Right ventricle myocardium inferior (tissue), 1 donor: ENCODE measurements at regions of chr20 and their contacts with region 1.

Region 1: DNA sequence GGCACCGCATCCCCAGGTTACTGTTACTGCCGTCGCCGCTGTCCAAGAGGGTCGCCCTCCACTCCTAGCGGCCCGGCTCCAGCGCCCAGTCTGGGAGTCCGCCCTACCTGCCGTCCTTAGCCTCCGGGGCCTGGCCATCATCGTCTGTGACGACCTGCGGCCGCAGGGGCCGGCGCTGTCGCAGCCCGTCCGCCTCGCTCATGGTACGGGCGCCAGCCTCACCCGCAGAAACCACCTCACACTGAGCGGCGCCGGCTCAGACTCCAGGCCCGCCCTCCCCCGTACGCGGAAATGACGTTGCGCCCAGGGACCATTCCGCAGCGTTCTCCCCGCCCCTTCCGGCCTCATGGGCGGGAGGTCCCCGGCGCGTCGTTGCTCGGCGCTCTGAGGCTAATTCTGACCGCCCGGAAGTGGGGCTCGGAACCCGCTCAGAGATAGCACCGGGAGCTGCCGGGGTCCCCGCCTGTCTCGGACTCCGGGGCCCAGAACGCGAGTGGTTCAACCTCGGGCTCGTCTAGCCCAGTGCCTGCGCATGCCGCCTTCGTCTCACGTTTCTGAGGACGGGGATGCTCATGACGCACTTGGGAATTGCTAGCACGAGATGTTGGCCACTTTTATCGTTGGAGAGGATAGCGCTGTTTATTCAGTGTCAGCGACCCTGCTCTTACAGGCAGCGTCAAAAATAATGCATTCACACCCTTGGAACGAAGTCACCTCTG is at the start of gene APMAP:
- DNase-seq: peak; percentile 99
- ATAC-seq: peak; percentile 97
- total RNA-seq, gene APMAP: 26.8 TPM

Region 2: GRCh38 chr20:24934101-24934661 is 58.5 kb before region 1 on chr20:
- intact Hi-C with region 1: no loop called
- DNase-seq: no peak
- ATAC-seq: no peak

Region 3: DNA sequence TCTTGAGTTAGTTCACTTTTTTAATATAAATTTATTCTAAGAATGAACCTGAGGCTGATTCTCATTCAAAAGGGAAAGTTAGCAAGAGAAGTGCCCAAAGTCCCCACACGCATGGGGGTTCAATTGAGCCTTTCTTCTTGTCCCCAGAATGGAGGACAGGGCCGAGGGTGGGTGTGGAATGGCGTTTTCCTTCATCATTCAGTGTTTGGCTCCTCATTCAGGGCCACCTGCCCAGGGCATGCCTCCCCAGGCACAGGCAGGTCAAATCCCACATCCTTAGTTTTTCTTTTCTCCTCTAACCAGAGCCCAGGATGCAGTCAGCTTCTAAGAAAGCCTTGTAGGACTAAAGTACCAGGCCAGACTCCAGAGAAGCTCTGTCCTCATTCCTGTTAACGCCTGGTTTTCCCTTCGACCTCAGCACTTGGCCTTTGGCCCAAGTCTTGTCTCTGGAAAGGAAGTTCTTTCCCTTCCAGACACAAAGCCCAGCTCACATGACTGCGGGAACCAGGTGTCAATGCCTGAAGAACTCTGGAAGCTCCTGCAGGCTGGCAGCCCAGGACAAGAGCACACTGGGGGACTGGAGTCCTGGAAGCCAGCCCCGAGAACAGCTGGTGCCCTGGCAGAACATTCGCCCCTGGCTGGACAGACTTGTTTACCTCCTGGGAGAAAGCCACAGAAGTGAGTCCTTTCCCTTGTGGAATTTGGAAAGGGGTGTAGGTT is 46.9 kb after region 1 on chr20:
- intact Hi-C with region 1: no loop called
- DNase-seq: peak; percentile 90
- ATAC-seq: peak; percentile 85

Region 4: DNA sequence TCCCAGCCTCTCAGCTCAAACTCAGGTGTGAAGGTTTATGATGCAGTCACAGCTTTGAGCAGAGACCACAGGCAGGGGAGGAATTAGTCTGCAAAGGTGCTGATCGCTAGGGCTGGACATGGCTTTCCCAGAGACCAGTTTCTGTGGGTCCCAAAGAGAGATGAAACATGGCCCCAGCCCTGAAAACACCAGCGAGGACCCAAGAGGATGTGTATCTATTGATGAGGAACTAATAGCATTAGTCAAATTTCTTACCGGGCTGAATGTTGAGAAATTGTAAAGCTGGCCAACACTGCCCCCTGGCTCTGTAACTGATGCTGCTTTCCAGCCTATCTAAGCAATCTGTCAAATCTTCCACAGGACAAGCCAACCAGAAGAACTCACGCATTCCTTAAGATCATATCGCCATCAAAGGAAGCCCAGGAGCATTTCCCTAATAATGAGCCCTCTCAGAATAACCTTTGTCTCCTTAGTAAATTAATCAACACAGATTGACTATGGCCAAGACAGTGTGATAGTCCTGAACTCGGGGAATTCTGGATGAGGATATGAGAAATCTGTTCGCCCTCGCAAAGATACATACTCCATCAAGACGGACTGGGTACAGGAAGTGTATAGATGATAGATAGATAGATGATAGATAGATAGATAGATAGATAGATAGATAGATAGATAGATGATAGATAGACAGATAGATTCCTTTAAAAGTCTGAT is 73.1 kb after region 1 on chr20:
- intact Hi-C with region 1: loop called (anchors 1 kb)
- DNase-seq: peak; percentile 71
- ATAC-seq: peak; percentile 73

Region 5: DNA sequence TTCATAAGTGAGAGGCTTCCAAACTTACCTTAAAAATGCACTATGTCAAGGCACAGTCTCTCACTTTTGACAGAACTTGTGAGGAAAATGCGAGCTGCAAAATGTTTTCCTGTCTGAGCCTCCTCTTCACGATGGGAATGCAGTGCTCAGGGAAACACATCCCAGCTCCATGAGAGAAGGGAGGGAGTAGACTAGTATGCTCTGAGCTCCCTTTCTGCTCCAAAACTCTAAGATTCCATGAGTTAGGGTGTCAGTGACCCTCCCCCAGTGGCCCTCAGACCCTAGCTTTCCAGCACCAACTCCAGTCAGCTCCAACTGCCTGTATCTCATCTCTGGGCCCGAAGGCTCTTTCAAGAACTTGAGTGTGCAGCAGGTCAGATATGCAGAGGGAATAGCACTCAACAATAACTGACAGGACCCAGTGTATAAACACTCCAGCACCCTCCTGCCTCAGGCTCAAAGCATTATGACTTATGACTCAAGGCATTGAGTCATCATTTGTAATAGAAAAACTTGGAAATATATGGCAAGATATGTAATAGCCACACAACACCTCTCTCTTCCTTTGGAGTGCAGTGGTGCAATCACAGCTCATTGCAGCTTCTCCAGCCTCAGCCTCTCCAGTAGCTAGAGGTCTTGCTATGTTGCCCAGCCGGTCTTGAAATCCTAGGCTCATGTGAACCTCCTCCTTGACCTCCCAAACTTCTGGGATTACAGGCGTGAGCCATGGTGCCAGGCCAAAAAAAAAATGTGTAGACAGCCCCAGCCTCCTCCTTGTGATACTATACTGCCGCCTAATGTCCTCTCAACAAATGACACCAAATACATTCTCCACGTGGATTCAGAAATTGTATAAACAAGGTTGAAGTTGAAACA is 186.2 kb after region 1 on chr20:
- intact Hi-C with region 1: loop called (anchors 1 kb)
- DNase-seq: no peak
- ATAC-seq: peak; percentile 91

Region 6: GRCh38 chr20:25195014-25195961 is 202.6 kb after region 1 on chr20 and contains the start of gene ENTPD6:
- intact Hi-C with region 1: loop called (anchors 5 kb)
- DNase-seq: peak; percentile 94
- ATAC-seq: peak; percentile 92
- total RNA-seq, gene ENTPD6: 132 TPM

Region 7: DNA sequence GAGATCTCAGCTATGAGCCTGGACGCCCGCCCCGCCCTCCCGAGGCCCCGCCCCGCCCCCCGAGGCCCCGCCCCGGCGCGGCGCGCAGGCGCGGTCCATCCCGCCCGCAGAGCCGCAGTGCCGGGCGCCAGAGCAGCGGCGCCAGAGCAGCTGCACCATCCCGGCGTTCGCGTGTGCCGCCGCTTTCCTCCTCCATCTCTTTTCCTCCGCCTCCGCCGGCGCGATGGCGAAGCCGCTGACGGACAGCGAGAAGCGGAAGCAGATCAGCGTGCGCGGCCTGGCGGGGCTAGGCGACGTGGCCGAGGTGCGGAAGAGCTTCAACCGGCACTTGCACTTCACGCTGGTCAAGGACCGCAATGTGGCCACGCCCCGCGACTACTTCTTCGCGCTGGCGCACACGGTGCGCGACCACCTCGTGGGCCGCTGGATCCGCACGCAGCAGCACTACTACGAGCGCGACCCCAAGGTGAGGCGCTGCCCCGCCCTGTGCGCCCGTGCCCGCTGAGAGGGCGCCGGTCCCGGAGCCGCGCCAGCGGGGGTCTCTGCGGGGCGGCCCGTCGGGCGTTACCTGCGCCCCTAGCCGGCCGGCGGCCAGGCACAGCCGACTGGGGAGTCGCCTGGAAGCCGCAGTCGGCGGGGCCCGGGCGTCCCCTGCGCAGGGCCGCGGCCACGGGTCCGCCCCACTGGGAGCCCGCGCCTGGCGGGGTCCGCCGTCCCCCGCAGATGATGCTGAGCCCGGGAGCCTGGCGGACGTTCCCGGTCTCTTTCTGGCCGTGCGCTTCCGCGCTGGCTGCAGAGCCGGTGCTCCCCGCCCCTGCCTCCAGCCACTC is 255.5 kb after region 1 on chr20 and contains the start of gene PYGB:
- intact Hi-C with region 1: loop called (anchors 5 kb)
- DNase-seq: peak; percentile 91
- ATAC-seq: peak; percentile 91
- total RNA-seq, gene PYGB: 174 TPM

Region 8: DNA sequence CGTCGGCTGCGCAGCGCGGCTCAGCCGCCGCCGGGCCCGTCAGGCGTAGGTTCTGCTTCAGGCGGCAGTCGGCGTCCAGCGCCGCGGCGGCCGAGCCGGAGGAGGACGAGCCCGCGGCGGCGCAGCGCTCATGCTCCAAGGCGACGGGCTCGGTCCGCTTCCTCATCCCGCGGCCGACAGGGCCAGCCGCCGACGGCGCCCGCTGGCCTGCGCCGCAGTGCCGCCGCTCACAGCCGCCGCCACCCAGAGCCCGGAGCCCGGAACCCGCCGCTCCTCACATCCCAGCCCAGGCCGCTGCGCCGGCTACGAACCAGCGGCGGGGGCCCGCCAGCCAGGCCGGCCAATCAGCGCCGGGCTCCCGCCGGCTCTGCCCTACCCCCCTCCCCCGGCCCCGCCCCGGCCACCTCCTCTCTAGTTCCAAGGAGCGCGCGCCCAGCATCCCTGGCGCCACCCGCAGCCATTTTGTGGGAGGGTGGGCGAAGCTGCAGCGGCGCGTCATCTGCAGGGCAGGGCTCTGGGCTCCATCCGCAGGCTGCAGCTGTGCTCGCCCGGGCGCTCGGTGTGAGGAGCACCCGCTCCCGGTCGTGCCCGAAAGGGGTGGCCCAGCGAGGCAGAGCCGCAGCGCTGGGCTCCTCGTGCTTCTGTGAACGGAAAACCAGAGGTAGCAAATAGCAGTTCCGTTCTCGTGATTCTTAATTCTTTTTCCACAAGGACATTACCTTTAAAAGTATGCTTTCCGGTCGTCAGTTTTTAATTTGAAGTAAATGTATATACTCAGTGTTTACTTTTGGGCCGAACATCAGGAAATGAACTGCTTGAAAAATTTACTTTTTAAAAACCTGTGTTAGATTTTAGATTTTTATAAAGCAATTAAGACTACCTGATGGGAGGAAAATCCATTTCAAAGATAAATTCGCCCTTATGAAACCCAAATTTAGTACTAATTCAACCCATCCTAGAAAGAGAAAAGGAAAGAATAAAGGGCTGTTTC is 398.2 kb after region 1 on chr20 and contains the start of gene ABHD12:
- intact Hi-C with region 1: loop called (anchors 2 kb)
- DNase-seq: peak; percentile 98
- ATAC-seq: peak; percentile 99
- total RNA-seq, gene ABHD12: 23.3 TPM